Activated T-helper 2 cell treated with anti-CD3 and anti-CD28 coated beads, Interferon-gamma antibody, Interleukin-2, Interleukin-4, amounts not matched to agents 10 μg/mL and 5 μg/mL and 100 μg/mL, durations not matched to agents 14 hours and 24 hours and 36 hours (primary cell): ENCODE measurements at regions of chr15 and their contacts with region 1.

Region 1: DNA sequence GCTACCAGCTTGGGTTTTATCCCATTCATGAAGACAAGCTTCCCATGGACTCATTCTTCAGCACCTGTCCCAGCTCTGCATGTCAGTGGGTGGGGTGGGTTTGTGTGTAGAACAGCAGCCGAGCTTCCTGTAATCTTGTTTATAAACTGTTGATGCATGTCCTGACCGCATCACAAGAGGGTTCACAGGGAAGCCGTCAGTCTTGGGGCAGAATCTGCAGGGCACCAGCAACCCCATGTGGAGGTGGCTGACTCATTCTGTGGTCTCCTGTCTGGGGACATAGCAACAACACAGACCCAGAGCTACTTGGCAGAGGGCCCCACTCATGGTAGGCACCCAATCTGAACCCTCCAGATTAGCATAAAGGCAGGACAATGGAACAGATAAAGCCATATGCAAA is 35.6 kb downstream of the DAPK2 start:
- DNase-seq: peak; percentile 80
- H3K4me3 Mint-ChIP-seq: peak overlapping the region; percentile 62
- H3K27ac Mint-ChIP-seq: peak overlapping the region; percentile 88
- H3K4me1 Mint-ChIP-seq: peaks cover 38% of the 10 kb centered on the region
- H3K27me3 Mint-ChIP-seq: no peaks in the 10 kb centered on the region

Region 2: GRCh38 chr15:62766599-62766998 is 1244.1 kb before region 1 on chr15:
- intact Hi-C with region 1: no loop called
- DNase-seq: no peak
- H3K4me3 Mint-ChIP-seq: no peak overlapping the region
- H3K27ac Mint-ChIP-seq: no peak overlapping the region
- H3K4me1 Mint-ChIP-seq: no peaks in the 10 kb centered on the region
- H3K27me3 Mint-ChIP-seq: no peaks in the 10 kb centered on the region

Region 3: GRCh38 chr15:63718590-63719035 is 292.1 kb before region 1 on chr15:
- intact Hi-C with region 1: no loop called
- DNase-seq: no peak
- H3K4me3 Mint-ChIP-seq: no peak overlapping the region
- H3K27ac Mint-ChIP-seq: no peak overlapping the region
- H3K4me1 Mint-ChIP-seq: peaks cover 13% of the 10 kb centered on the region
- H3K27me3 Mint-ChIP-seq: no peaks in the 10 kb centered on the region

Region 4: DNA sequence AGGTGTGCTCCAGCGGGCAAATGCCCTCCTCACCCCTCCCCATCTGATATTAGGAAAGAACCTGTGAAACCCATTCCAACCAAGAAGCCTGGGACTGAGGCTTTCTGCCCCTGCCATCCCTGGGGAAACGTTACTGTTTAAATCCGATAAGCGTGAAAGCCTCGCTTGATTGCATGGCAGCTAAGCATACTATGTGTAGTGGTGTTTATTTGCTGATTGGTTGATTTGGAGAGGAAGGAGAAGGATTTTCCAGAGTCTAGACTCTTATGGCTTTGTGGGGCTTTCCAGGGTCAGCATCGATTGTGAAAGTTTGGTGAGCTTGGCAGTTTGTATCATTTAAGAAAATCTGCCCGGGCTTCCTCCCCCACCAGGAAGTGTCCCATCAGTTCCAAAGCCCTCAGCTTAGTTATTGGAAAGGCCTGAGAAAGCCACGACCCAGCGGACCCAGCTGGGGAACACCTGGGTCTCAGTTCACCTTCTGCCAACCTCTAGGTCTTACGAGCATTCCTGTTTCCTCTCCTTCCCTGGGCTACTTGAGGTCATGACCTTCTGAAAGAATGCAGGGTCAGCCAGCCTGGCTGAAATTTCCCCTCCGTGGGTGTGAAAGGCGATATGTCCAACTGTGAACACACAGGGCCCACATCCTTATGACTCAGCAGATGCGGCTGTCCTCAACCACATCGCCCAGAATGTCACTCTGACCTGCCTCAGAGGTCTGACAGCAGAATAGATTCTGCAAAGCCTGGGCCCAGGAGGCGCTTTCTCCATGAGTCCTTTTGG is 114.2 kb before region 1 on chr15:
- intact Hi-C with region 1: loop called (anchors 1 kb)
- DNase-seq: peak; percentile 50
- H3K4me3 Mint-ChIP-seq: peak overlapping the region; percentile 10
- H3K27ac Mint-ChIP-seq: peak overlapping the region; percentile 35
- H3K4me1 Mint-ChIP-seq: peaks cover 61% of the 10 kb centered on the region
- H3K27me3 Mint-ChIP-seq: no peaks in the 10 kb centered on the region

Region 5: GRCh38 chr15:63939531-63940130 is 71.1 kb before region 1 on chr15:
- intact Hi-C with region 1: loop called (anchors 5 kb)
- DNase-seq: peak; percentile 10
- H3K4me3 Mint-ChIP-seq: no peak overlapping the region
- H3K27ac Mint-ChIP-seq: peak overlapping the region; percentile 76
- H3K4me1 Mint-ChIP-seq: peaks cover 32% of the 10 kb centered on the region
- H3K27me3 Mint-ChIP-seq: no peaks in the 10 kb centered on the region

Region 6: GRCh38 chr15:63970621-63971426 is 39.9 kb before region 1 on chr15:
- intact Hi-C with region 1: loop called (anchors 1 kb)
- DNase-seq: no peak
- H3K4me3 Mint-ChIP-seq: peak overlapping the region; percentile 75
- H3K27ac Mint-ChIP-seq: peak overlapping the region; percentile 100
- H3K4me1 Mint-ChIP-seq: peaks cover 39% of the 10 kb centered on the region
- H3K27me3 Mint-ChIP-seq: no peaks in the 10 kb centered on the region

Region 7: GRCh38 chr15:64046347-64047153 is 35.8 kb after region 1 on chr15 and contains the start of gene DAPK2:
- intact Hi-C with region 1: loop called (anchors 1 kb)
- DNase-seq: peak; percentile 58
- H3K4me3 Mint-ChIP-seq: peak within 1 kb of the TSS; percentile 68
- H3K27ac Mint-ChIP-seq: no peak within 1 kb of the TSS
- H3K4me1 Mint-ChIP-seq: peaks cover 13% of the 10 kb centered on the region
- H3K27me3 Mint-ChIP-seq: peaks cover 28% of the 10 kb centered on the region
- total RNA-seq, gene DAPK2: 1.9 and 2.0 TPM in 2 replicates

Region 8: GRCh38 chr15:64058279-64058678 is 47.6 kb after region 1 on chr15:
- intact Hi-C with region 1: no loop called
- DNase-seq: no peak
- H3K4me3 Mint-ChIP-seq: no peak overlapping the region
- H3K27ac Mint-ChIP-seq: no peak overlapping the region
- H3K4me1 Mint-ChIP-seq: no peaks in the 10 kb centered on the region
- H3K27me3 Mint-ChIP-seq: peaks cover 4% of the 10 kb centered on the region

Region 9: GRCh38 chr15:64247906-64248541 is 237.3 kb after region 1 on chr15:
- intact Hi-C with region 1: no loop called
- DNase-seq: peak; percentile 22
- H3K4me3 Mint-ChIP-seq: no peak overlapping the region
- H3K27ac Mint-ChIP-seq: peak overlapping the region; percentile 47
- H3K4me1 Mint-ChIP-seq: peaks cover 48% of the 10 kb centered on the region
- H3K27me3 Mint-ChIP-seq: no peaks in the 10 kb centered on the region